Mammary epithelial cell (primary cell): ENCODE measurements at regions of chr3 and their contacts with region 1.

Region 1: GRCh38 chr3:11392014-11392859 is 120.0 kb downstream of the ATG7 start:
- DNase-seq: peak; percentile 80
- H3K4me3 ChIP-seq: peak overlapping the region in 1 of 3 experiments; percentile 1
- H3K27ac ChIP-seq: peak overlapping the region; percentile 57
- H3K4me1 ChIP-seq: peaks cover 24% of the 10 kb centered on the region
- H3K27me3 ChIP-seq: no peaks in the 10 kb centered on the region
- CTCF ChIP-seq: no peak

Region 2: GRCh38 chr3:11322931-11323330 is 69.3 kb before region 1 on chr3:
- CTCF ChIA-PET with region 1: no interaction called
- dilution Hi-C with region 1: no loop called
- in situ Hi-C with region 1: no loop called
- intact Hi-C with region 1: no loop called
- DNase-seq: no peak
- H3K4me3 ChIP-seq: no peak overlapping the region
- H3K27ac ChIP-seq: no peak overlapping the region
- H3K4me1 ChIP-seq: no peaks in the 10 kb centered on the region
- H3K27me3 ChIP-seq: no peaks in the 10 kb centered on the region
- CTCF ChIP-seq: no peak

Region 3: DNA sequence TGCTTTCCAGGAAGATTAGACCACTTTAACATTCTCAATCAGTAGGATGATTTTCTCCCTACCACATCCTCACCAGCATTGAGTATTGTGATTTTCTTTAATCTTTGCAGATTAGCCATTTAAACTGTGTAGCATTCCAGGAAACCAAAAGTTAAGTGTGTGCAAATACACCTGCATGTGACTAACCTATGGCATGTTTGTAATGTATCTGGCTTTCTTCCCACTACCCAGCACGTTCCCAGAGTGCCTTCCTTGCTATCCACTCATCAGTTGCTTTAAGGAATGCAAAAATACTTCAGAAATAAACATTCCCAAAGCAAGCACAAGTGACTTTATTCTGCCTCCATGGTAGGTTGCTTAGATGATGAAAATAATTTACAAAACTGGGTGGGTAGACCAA is 45.8 kb before region 1 on chr3:
- CTCF ChIA-PET with region 1: no interaction called
- dilution Hi-C with region 1: loop called (anchors 5 kb)
- in situ Hi-C with region 1: no loop called
- intact Hi-C with region 1: no loop called
- DNase-seq: peak; percentile 39
- H3K4me3 ChIP-seq: no peak overlapping the region
- H3K27ac ChIP-seq: no peak overlapping the region
- H3K4me1 ChIP-seq: peaks cover 5% of the 10 kb centered on the region
- H3K27me3 ChIP-seq: no peaks in the 10 kb centered on the region
- CTCF ChIP-seq: no peak

Region 4: DNA sequence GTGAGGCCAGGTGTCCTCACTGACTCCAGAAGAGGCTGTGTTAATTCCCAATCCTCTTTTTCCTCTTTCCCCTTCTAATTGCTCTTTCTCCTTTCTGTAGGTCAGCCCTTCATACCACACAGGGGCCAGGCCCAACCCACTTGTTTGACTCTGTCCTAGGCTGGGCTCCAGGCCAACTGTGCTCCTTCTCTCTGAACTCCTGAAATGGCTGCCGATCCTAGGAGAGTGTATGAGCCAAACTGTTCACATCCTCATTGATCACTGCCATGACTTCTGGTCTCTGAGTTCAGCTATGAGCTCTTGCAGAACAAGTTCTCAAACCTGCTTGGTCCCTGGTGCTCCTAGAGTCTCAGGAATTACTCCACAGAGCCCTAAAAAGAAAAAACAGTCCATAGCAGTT is 106.4 kb after region 1 on chr3:
- CTCF ChIA-PET with region 1: no interaction called
- dilution Hi-C with region 1: loop called (anchors 5 kb)
- in situ Hi-C with region 1: no loop called
- intact Hi-C with region 1: no loop called
- DNase-seq: peak; percentile 43
- H3K4me3 ChIP-seq: no peak overlapping the region
- H3K27ac ChIP-seq: no peak overlapping the region
- H3K4me1 ChIP-seq: peaks cover 14% of the 10 kb centered on the region
- H3K27me3 ChIP-seq: no peaks in the 10 kb centered on the region
- CTCF ChIP-seq: no peak